CD4-positive, alpha-beta T cell (primary cell): ENCODE measurements at regions of chr17 and their contacts with region 1.

Region 1: DNA sequence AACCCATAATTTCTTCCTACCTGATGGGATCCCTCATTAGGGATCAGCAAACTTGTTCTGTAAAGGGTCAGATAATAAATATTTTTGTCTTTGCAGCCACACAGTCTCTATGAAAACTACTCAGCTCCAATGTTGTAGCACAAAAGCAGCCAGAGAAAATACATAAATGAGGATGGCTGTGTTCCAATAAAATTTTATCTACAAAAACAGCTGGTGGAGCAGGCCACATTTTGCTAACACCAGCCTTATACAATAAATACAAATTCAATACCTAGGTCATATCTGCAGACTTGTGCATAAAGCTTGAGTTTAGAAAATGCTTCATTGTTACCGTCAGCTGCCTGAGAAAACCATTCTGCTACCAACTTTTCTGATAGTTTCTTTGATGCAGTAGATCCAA is 38.4 kb upstream of the INTS2 start:
- DNase-seq: no peak
- ATAC-seq: no peak
- H3K4me3 ChIP-seq: no peak overlapping the region
- H3K4me3 Mint-ChIP-seq: no peak overlapping the region
- H3K27ac ChIP-seq: no peak overlapping the region
- H3K27ac Mint-ChIP-seq: no peak overlapping the region
- H3K4me1 ChIP-seq: no peaks in the 10 kb centered on the region
- H3K4me1 Mint-ChIP-seq: no peaks in the 10 kb centered on the region
- H3K27me3 ChIP-seq: no peaks in the 10 kb centered on the region
- H3K27me3 Mint-ChIP-seq: no peaks in the 10 kb centered on the region
- CTCF ChIP-seq: no peak

Region 2: DNA sequence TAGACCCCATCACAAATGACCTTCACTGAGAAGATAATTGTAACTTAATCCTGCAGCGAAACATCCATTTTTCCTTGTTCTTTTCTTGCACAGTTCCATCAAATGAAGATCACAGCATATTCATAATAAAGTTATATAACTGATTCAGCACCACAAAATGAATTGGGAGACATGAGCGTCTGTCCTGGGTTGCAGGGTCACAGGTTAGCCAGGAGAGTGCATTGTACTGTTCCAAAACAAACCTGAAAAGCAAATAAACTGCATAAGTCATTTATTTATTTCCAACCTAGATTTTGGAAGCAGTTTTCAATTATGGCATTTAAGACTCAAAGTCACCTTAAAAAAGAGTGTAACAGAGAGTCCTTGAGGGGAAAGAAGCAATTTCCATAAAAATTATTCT is 19.8 kb before region 1 on chr17:
- CTCF ChIA-PET with region 1: no interaction called
- POLR2A ChIA-PET with region 1: no interaction called
- intact Hi-C with region 1: loop called in 1 of 2 experiments (anchors 2 kb)
- DNase-seq: no peak
- ATAC-seq: no peak
- H3K4me3 ChIP-seq: no peak overlapping the region
- H3K4me3 Mint-ChIP-seq: no peak overlapping the region
- H3K27ac ChIP-seq: no peak overlapping the region
- H3K27ac Mint-ChIP-seq: peak overlapping the region; percentile 21
- H3K4me1 ChIP-seq: no peaks in the 10 kb centered on the region
- H3K4me1 Mint-ChIP-seq: no peaks in the 10 kb centered on the region
- H3K27me3 ChIP-seq: no peaks in the 10 kb centered on the region
- H3K27me3 Mint-ChIP-seq: no peaks in the 10 kb centered on the region
- CTCF ChIP-seq: no peak